Activated CD4-positive, alpha-beta memory T cell treated with anti-CD3 and anti-CD28 coated beads, Interleukin-2, amount 10 ng/mL, durations not matched to agents 7 days and 5 days (primary cell): ENCODE measurements at regions of chr1 and their contacts with region 1.

Region 1: GRCh38 chr1:243343970-243344937 is 88.4 kb downstream of the SDCCAG8 start:
- DNase-seq: no peak
- H3K4me3 Mint-ChIP-seq: no peak overlapping the region
- H3K27ac Mint-ChIP-seq: no peak overlapping the region
- H3K4me1 Mint-ChIP-seq: peaks cover 4% of the 10 kb centered on the region
- H3K27me3 Mint-ChIP-seq: no peaks in the 10 kb centered on the region

Region 2: DNA sequence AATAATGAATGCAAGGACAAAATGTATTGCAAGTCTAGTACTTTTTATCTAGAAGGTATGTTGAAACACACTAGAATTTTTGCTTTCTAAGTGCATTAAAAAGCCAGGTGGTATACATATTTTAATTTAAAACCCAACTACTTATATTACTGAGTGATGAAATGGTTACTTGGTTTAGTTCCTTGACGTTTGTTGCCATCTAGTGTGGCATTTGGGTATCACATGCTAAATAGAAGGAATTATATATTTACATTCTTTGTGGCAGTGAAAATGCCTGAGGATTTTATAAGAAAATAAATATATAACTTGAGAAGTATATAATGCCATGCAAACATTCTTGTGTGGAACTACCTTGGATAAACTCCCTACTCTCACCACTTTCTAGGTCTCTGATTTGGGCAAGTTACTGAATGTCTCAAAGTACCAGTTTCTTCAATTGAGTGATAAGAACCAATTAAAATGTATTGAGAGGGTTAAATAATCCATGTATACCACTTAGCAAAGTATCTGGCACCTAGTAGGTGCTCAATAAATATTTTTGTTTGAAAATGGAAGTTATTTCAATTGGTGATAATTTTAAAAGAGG is 18.9 kb before region 1 on chr1:
- CTCF ChIA-PET with region 1: no interaction called
- POLR2A ChIA-PET with region 1: no interaction called
- DNase-seq: no peak
- H3K4me3 Mint-ChIP-seq: no peak overlapping the region
- H3K27ac Mint-ChIP-seq: no peak overlapping the region
- H3K4me1 Mint-ChIP-seq: no peaks in the 10 kb centered on the region
- H3K27me3 Mint-ChIP-seq: no peaks in the 10 kb centered on the region

Region 3: GRCh38 chr1:243409284-243409683 is 65.0 kb after region 1 on chr1:
- CTCF ChIA-PET with region 1: interaction called, 19 read pairs
- POLR2A ChIA-PET with region 1: no interaction called
- DNase-seq: no peak
- H3K4me3 Mint-ChIP-seq: no peak overlapping the region
- H3K27ac Mint-ChIP-seq: no peak overlapping the region
- H3K4me1 Mint-ChIP-seq: peaks cover 21% of the 10 kb centered on the region
- H3K27me3 Mint-ChIP-seq: no peaks in the 10 kb centered on the region

Region 4: GRCh38 chr1:243748706-243749283 is 404.5 kb after region 1 on chr1:
- CTCF ChIA-PET with region 1: interaction called, 14 read pairs
- POLR2A ChIA-PET with region 1: no interaction called
- DNase-seq: no peak
- H3K4me3 Mint-ChIP-seq: no peak overlapping the region
- H3K27ac Mint-ChIP-seq: no peak overlapping the region
- H3K4me1 Mint-ChIP-seq: no peaks in the 10 kb centered on the region
- H3K27me3 Mint-ChIP-seq: no peaks in the 10 kb centered on the region